ENCODE measurements at regions of chr6 and their contacts with region 1.

Region 1: DNA sequence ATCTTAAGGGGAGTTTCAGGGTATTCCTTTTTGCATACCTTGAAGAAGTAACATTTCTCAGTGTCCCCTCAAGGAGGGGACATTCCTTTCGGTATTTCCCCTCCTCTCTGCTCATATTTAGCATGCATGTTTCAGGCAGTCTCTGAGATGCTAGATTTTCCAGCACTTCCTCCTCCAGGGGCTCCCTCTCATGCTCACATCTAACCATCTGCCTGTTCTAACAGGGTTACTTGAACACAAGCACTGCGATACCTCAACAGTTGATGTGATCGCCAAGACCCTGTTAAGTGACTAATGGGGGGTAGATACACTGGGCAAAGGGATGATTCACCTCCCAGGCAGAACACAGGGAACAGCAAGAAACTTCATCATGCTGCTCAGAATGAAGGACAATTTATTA is 12.9 kb upstream of the MCM3 start:
- DNase-seq: no peak
- ATAC-seq: peak; percentile 40
- H3K4me3 Mint-ChIP-seq: no peak overlapping the region
- H3K27ac Mint-ChIP-seq: peak overlapping the region; percentile 84
- H3K4me1 Mint-ChIP-seq: peaks cover 40% of the 10 kb centered on the region
- H3K27me3 Mint-ChIP-seq: no peaks in the 10 kb centered on the region
- CTCF ChIP-seq: no peak

Region 2: DNA sequence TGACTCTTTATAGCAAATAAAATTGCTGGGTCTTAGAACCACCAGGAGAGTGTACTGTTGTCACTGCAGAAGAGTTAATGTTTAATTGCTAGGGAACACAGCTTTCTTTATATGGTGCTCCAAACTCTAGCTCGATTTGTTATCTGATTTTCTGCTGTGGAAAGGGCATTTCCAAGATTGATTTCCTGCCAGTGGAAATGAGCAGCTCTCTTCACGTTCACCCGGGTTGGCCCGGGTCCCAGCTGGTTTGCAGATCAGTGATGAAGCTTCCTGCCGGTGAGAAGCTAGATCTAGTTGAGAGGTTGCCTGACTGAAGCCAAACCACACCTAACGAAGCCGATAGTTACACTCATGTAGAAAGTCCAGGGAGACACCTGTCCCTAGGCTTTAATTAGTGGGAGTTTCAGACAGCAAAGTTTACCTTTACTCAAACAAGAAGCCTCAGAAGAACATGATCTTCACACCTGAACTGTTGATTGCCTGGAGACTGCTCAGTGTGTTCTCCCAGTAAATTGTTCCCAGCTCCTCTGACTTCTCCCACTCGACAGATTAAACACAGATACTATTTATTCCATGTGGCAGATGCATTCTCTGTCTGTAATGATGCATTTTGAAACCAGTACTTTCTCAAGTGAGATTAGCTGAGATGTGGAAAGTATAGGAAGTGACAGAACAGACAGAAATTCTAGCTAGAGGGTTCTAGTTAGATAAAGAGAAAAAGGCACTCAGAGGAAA is 92.4 kb after region 1 on chr6:
- CTCF ChIA-PET with region 1: no interaction called
- POLR2A ChIA-PET with region 1: interaction called, 5 read pairs
- intact Hi-C with region 1: loop called (anchors 1 kb)
- DNase-seq: peak; percentile 77
- ATAC-seq: peak; percentile 64
- H3K4me3 Mint-ChIP-seq: peak overlapping the region; percentile 54
- H3K27ac Mint-ChIP-seq: peak overlapping the region; percentile 93
- H3K4me1 Mint-ChIP-seq: peaks cover 86% of the 10 kb centered on the region
- H3K27me3 Mint-ChIP-seq: no peaks in the 10 kb centered on the region
- CTCF ChIP-seq: no peak